Mammary epithelial cell (primary cell): ENCODE measurements at regions of chr5 and their contacts with region 1.

Region 1: DNA sequence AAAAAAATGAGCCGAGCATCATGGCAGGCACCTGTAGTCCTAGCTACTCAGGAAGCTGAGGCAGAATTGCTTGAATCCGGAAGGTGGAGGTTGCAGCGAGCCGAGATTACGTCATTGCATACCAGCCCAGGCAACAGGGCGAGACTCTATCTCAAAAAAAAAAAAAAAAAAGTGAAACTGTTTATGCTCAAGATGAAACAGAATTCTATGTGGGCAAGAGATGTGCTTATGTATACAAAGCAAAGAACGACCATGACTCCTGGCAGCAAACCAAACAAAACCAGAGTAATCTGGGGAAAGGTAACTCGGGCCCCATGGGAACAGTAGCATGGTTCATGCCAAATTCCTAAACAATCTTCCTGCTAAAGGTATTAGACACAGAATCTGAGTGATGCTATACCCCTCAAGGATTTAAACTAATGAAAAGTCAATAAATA is 32.6 kb upstream of the PLAC8L1 start:
- DNase-seq: peak; percentile 9
- H3K4me3 ChIP-seq: no peak overlapping the region
- H3K27ac ChIP-seq: no peak overlapping the region
- H3K4me1 ChIP-seq: no peaks in the 10 kb centered on the region
- H3K27me3 ChIP-seq: no peaks in the 10 kb centered on the region
- CTCF ChIP-seq: no peak

Region 2: GRCh38 chr5:145818604-145819003 is 319.4 kb before region 1 on chr5:
- CTCF ChIA-PET with region 1: no interaction called
- dilution Hi-C with region 1: no loop called
- in situ Hi-C with region 1: no loop called
- intact Hi-C with region 1: no loop called
- DNase-seq: no peak
- H3K4me3 ChIP-seq: no peak overlapping the region
- H3K27ac ChIP-seq: no peak overlapping the region
- H3K4me1 ChIP-seq: no peaks in the 10 kb centered on the region
- H3K27me3 ChIP-seq: no peaks in the 10 kb centered on the region
- CTCF ChIP-seq: no peak

Region 3: DNA sequence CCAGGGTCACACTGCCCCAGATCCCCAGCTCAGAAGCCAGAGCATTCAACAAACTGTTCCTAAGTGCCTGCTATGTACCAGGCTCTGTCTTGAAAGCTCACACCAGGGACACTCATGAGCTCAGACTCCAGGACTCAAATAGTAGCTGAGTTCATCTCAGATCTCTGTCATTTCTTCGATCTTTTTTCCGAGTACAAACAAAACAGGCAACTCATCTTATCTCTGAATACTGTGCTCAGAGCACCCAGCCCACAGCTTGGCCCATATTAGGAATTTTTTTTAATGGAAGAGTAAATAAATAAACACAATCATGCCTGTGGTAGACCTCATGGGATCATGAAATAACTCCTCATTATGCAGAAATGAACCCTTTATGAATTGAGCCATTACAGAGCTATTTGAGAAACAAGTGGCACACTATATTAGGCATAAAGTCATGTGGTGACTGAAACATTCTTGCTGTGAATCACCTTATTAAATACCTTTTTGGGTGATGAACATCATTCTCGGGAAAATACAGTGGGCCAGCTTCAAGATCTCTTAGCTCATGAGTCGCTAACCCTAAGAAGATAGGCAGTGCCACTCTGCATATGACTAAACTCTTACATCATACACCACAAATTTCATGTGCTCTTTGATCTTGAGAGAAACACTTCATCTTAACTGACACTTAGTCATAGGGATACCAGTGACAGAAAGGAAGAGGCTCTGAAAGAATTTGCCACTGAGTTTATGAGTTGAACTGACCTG is 191.7 kb before region 1 on chr5:
- CTCF ChIA-PET with region 1: no interaction called
- dilution Hi-C with region 1: no loop called
- in situ Hi-C with region 1: no loop called
- intact Hi-C with region 1: no loop called
- DNase-seq: peak; percentile 98
- H3K4me3 ChIP-seq: no peak overlapping the region
- H3K27ac ChIP-seq: peak overlapping the region; percentile 65
- H3K4me1 ChIP-seq: peaks cover 83% of the 10 kb centered on the region
- H3K27me3 ChIP-seq: no peaks in the 10 kb centered on the region
- CTCF ChIP-seq: no peak

Region 4: DNA sequence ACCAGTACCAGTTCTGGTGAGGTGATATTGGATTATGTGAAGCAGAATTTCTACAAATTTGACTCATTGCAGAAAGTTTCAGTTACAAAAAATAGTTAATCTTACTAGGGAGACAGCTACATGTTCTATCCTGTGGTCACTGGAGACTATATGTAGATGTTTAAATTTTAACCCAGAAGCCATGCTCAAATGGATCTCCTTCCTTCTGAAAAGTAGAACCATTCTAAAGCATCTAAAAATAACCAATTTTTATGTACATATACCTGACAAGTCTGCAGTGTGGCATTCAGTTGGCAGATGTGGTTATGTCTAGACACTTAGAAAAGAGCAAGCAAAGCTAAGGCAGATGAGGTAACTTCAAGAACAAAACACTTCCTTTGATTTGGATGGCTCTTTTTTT is 135.1 kb after region 1 on chr5:
- CTCF ChIA-PET with region 1: no interaction called
- dilution Hi-C with region 1: no loop called
- in situ Hi-C with region 1: loop called in 1 of 2 experiments (anchors 25 kb)
- intact Hi-C with region 1: loop called (anchors 10 kb)
- DNase-seq: no peak
- H3K4me3 ChIP-seq: no peak overlapping the region
- H3K27ac ChIP-seq: no peak overlapping the region
- H3K4me1 ChIP-seq: no peaks in the 10 kb centered on the region
- H3K27me3 ChIP-seq: no peaks in the 10 kb centered on the region
- CTCF ChIP-seq: no peak